ENCODE measurements at regions of chr2 and their contacts with region 1.

Region 1: GRCh38 chr2:181715033-181715630 is 34.8 kb upstream of the NEUROD1 start:
- DNase-seq: peak in 7 of 10 donors; percentile 47 to 88 (median 67)

Region 2: DNA sequence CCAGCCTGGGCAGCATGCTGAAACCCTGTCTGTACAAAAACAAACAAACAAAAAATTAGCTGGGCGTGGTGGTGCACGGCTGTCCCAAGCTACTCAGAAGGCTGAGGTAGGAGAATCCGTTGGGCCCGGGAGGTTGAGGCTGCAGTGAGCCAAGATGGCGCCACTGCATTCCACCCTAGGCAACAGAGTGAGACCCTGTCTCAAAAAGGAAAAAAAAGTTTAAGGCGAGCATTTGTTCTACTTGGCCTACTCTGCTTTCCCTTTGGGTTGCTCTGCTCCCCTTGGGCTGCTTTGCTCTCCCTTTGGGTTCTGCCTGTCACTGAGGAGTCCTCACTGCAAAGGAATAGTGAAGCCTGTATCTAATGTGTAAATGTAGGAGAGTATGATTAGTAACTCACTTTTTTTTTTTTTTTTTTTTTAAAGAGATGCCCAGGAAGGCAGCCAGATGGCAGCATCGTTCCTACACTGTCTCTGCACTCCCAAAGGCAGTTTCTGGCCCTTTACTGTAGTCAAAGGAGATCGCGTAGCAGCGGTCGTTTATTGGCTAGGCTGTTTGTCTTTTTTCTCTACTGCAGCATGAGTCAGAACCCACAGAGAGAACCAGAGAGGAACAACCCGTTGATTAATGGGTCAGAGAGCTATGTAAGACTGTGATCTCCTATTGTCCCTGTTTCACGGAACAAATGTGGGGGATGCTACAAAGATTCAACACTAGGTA is 1589.7 kb before region 1 on chr2:
- intact Hi-C with region 1: loop called (anchors 2 kb)
- DNase-seq: peak; percentile 29 to 93 (median 58)

Region 3: GRCh38 chr2:181077128-181077709 is 637.9 kb before region 1 on chr2:
- intact Hi-C with region 1: loop called (anchors 1 kb)
- DNase-seq: no peak

Region 4: DNA sequence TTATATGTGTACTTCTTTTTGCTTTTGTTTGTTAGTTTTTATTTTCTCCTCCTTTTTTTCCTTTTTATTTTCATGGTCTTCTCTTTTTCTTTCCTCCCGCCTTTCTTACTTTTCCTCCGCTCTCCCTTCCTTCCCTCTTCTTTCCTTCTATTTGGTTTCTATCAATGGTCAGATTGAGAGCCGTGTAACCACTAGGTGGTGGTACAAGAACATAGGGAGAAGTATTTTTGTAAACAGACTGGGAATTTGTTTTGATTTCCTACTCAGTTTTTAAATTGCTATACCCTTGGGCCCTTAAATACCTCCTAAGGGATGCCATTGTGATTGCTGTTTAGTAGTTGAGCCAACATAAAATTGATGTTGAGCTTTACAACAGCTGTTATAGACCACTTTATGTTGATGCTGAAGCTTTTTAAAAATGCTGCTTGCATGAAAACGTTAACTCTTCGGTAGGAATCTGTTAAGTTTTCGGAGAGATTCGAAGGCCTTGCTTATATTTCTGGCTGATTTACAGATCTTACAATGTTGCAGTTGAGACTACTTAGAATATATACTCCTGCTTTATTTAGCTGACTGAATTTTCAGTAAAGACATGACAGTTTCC is 610.5 kb before region 1 on chr2:
- intact Hi-C with region 1: loop called (anchors 2 kb)
- DNase-seq: no peak

Region 5: GRCh38 chr2:181523756-181524155 is 191.4 kb before region 1 on chr2:
- intact Hi-C with region 1: no loop called
- DNase-seq: no peak

Region 6: GRCh38 chr2:181573140-181573736 is 141.9 kb before region 1 on chr2:
- intact Hi-C with region 1: loop called (anchors 5 kb)
- DNase-seq: no peak

Region 7: DNA sequence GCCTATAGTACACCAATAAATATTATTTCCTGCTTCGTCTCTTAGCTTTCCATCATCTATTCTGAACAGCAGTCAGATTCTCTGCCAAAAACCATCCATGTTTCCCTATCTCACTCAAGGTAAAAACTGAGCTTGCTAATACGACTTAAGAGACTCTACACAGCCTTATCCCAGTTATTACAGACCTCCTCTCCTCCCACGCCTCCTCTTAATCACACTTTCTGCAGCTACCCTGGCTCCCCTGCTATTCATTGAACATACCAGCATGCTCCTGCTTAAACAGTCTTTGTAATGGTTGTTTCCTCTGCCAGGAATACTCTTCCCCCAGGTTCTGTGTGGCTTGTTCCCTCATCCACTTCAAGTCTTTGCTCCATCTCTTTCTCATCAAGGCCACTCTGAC is 630.3 kb after region 1 on chr2:
- intact Hi-C with region 1: no loop called
- DNase-seq: no peak